ENCODE measurements at regions of chr6 and their contacts with region 1.

Region 1: DNA sequence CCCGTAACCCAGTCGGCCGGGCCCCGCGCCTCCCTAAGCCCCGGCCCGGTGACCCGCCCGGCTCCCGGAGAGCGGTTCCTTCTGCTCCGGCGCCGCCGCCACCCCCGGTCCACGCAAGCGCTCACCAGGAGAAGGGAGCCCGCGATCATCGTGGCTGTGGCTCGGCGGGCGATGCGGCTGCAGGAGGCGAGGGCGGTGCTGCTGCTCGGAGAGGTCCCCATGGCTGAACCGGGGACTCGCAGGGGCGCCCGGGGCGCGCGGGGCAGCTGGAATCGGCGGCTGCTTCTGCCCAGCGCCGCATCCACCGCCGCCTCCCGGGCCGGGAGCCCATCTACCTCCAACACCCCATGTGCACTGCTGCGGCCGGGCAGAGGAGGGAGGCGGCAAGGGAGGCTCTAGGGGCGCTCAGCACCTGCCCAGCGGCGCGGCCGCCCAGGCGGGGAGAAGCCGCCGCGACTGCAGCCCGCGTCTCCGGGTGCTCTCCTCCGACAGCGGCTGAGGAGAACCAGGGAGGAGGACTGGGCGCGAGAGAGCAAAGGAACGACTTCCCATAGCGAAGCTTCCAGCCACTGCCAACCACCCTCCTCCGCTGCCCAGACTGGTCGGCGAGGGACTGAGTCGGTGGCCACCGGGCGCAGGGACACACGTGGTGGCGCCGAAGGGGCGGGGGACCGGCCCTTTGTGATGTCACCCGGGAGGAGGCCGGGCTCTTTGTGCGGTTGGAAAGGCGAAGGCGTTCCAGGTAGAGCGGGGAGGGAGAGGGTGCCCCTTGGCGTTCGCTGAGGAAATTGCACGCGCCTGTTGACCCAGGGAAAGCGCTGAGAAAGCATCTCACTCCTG is at the start of gene TNFRSF21:
- DNase-seq: peak; percentile 87 to 97 (median 95)
- H3K4me3 ChIP-seq: peak within 1 kb of the TSS; percentile 61 to 93 (median 82)
- H3K27ac ChIP-seq: peak within 1 kb of the TSS; percentile 31 to 92 (median 80)
- H3K27me3 ChIP-seq: peaks cover 0 to 4% (median 0%) of the 10 kb centered on the region in 45 donors
- CTCF ChIP-seq: peak; percentile 74 to 99 (median 96)
- total RNA-seq, gene TNFRSF21: 35.8 to 77.3 (median 56.1) TPM

Region 2: DNA sequence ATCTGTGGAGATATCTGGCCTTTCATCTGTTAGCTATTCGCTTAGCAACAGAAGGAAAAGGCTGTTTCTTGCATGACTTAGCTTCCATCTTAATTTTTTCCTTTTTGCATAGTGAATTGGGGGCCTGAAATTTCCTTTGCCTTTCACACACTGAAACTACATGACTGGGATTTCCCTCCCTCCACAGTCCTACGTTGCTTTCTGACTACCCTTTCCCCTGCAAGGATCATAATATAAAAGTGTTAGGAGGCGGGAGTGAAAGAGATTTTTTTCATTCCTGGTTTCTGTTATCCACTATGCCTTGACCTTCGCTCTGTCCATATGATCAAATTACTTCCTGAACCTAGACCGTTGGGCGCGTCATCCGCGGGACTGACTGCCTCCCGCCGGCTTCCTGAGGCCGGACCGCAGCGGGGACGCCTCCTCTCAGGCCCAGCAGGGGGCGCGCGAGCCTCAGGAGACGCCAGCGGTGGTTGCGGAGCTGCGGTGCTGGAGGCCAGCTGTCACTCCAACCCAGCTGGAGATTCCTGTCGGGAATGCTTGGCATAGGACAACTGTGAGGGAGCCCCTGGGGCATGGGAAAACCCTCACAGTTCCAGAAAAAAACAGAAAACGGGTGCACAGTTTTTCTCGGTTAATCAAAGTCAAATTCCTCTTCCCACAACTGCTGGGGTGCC is 460.7 kb before region 1 on chr6:
- intact Hi-C with region 1: loop called (anchors 2 to 5 kb)
- DNase-seq: peak; percentile 64 to 92 (median 80)
- H3K4me3 ChIP-seq: peak overlapping the region in 39 of 59 donors; percentile 8 to 49 (median 28)
- H3K27ac ChIP-seq: peak overlapping the region in 1 of 59 donors; percentile 53
- H3K27me3 ChIP-seq: no peaks in the 10 kb centered on the region
- CTCF ChIP-seq: peak; percentile 84 to 99 (median 97)

Region 3: GRCh38 chr6:47097092-47097945 is 212.2 kb before region 1 on chr6:
- intact Hi-C with region 1: loop called (anchors 1 to 2 kb)
- DNase-seq: peak in 9 of 10 donors; percentile 22 to 80 (median 60)
- H3K4me3 ChIP-seq: no peak overlapping the region
- H3K27ac ChIP-seq: peak overlapping the region in 8 of 59 donors; percentile 3 to 52 (median 24)
- H3K27me3 ChIP-seq: no peaks in the 10 kb centered on the region
- CTCF ChIP-seq: peak; percentile 36 to 85 (median 72)

Region 4: GRCh38 chr6:47242483-47243386 is 66.8 kb before region 1 on chr6:
- intact Hi-C with region 1: loop called in 1 of 2 experiments (anchors 5 kb)
- DNase-seq: peak; percentile 47 to 91 (median 69)
- H3K4me3 ChIP-seq: peak overlapping the region in 19 of 59 donors; percentile 0 to 45 (median 13)
- H3K27ac ChIP-seq: peak overlapping the region in 13 of 59 donors; percentile 7 to 60 (median 26)
- H3K27me3 ChIP-seq: no peaks in the 10 kb centered on the region
- CTCF ChIP-seq: no peak